Adrenal gland (tissue), 19 donors: ENCODE measurements at regions of chr9 and their contacts with region 1.

Region 1: DNA sequence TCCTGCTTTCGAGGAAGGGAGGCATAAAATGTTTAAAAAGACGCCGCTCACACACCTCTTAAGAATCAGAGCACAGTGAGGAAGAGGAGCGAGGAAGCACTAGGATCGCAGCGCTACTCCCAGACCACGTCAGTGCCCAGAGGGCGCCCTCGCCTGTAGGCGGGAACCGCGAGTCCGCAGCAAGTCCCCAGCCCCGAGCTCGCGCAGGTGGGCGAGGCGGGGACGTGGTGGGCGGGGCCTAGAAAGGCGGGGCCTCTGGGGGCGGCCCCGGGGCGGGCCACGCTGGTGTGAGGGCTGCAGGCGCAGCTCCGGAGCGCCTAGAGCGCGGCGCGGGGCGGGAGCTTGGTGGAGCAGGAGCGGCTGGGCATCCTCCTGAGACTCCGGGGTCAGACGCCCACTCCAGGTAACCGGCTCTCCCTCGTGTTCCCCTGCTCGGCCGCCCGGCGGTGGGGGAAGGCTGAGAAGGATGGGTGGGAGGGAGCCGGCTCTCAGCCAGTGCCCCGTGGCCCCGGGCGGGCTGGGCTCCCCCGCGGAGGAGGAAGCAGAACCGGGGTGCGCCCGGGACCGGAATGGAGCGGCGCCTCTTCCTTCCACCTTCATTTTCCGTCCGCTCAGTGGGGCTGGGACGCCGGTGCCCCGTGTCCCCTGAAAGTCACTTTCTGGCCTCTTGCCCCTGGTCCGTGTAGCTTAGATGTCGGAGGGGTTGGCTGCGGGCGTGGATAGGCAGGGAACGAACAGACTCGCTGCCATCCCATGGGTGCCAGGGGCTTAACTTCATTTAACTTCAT is at the start of gene GCNT1:
- DNase-seq: peak; percentile 50 to 81 (median 73)
- H3K4me3 ChIP-seq: peak within 1 kb of the TSS in 3 of 4 donors; percentile 16 to 56 (median 20)
- H3K27ac ChIP-seq: peak within 1 kb of the TSS in 1 of 5 donors; percentile 36
- H3K4me1 ChIP-seq: peaks cover 6 to 18% of the 10 kb centered on the region in 2 donors
- H3K27me3 ChIP-seq: no peaks in the 10 kb centered on the region
- CTCF ChIP-seq: peak in 2 of 6 experiments; percentile 20 to 26
- POLR2A ChIP-seq: no peak
- total RNA-seq, gene GCNT1: 0.79 to 56.4 (median 3.8) TPM

Region 2: DNA sequence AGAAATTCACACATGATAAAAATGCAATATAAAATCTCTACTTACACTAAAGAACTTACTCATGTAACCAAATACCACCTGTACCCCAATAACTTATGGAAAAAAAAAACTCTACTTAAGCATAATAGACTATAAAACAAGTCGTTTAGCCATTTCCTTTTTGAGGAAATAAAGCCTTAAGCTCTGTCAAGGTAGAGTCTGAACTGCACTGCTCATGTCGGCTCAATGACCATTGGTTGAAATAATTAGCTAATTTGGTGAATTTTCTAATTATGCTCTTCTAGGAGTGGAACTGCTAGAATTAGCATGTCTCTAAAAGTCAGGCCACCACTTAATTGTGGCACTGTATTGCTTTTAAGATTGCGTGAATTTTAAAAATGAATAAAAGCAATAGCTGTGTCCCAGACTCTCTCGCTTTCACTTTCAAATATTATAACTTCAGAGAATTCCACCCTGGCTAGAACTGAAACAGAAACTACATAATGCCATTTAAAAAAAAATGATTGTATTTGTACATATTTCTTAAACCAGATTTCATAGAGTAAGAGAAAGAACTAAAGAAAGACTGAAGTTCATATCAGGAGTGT is 192.1 kb after region 1 on chr9:
- intact Hi-C with region 1: loop called in 1 of 2 experiments (anchors 5 kb)
- DNase-seq: no peak
- H3K4me3 ChIP-seq: peak overlapping the region in 1 of 4 donors; percentile 30
- H3K27ac ChIP-seq: peak overlapping the region in 2 of 5 donors; percentile 18 to 57
- H3K4me1 ChIP-seq: no peaks in the 10 kb centered on the region
- H3K27me3 ChIP-seq: no peaks in the 10 kb centered on the region
- CTCF ChIP-seq: no peak
- POLR2A ChIP-seq: no peak